ENCODE measurements at regions of chr10 and their contacts with region 1.

Region 1: GRCh38 chr10:27611744-27612550 is 107.8 kb downstream of the RAB18 start:
- DNase-seq: no peak
- ATAC-seq: no peak
- H3K4me3 ChIP-seq: no peak overlapping the region
- H3K4me3 Mint-ChIP-seq: no peak overlapping the region
- H3K27ac ChIP-seq: no peak overlapping the region
- H3K27ac Mint-ChIP-seq: no peak overlapping the region
- H3K4me1 ChIP-seq: no peaks in the 10 kb centered on the region
- H3K4me1 Mint-ChIP-seq: peaks cover 3 to 14% (median 8%) of the 10 kb centered on the region in 3 donors
- H3K27me3 ChIP-seq: no peaks in the 10 kb centered on the region
- H3K27me3 Mint-ChIP-seq: peaks cover 3 to 5% of the 10 kb centered on the region in 2 donors

Region 2: DNA sequence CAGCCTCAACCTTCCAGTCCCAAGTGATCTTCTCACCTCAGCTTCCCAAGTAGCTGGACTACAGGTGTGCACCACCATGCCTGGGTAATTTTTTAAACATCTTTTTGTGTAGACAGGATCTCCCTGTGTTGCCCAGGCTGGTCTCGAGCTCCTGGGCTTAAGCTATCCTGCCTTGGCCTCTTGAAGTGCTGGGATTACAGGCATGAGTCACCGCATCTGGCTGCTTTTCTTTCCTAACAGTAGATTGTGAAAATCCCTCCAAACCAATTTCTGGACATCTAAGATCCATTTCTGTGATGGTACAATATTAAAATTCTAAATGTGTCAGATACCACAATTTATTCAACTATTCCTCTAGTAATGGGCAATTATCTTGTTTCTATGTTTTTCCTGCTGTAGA is 69.1 kb before region 1 on chr10:
- CTCF ChIA-PET with region 1: no interaction called
- POLR2A ChIA-PET with region 1: interaction called in 1 of 2 experiments, 13 read pairs
- DNase-seq: no peak
- ATAC-seq: no peak
- H3K4me3 ChIP-seq: no peak overlapping the region
- H3K4me3 Mint-ChIP-seq: peak overlapping the region in 1 of 3 donors; percentile 38
- H3K27ac ChIP-seq: peak overlapping the region; percentile 52
- H3K27ac Mint-ChIP-seq: peak overlapping the region; percentile 60 to 74
- H3K4me1 ChIP-seq: peaks cover 6 to 17% of the 10 kb centered on the region in 2 experiments
- H3K4me1 Mint-ChIP-seq: peaks cover 28 to 48% (median 38%) of the 10 kb centered on the region in 3 donors
- H3K27me3 ChIP-seq: no peaks in the 10 kb centered on the region
- H3K27me3 Mint-ChIP-seq: no peaks in the 10 kb centered on the region